ENCODE measurements at regions of chr20 and their contacts with region 1.

Region 1: DNA sequence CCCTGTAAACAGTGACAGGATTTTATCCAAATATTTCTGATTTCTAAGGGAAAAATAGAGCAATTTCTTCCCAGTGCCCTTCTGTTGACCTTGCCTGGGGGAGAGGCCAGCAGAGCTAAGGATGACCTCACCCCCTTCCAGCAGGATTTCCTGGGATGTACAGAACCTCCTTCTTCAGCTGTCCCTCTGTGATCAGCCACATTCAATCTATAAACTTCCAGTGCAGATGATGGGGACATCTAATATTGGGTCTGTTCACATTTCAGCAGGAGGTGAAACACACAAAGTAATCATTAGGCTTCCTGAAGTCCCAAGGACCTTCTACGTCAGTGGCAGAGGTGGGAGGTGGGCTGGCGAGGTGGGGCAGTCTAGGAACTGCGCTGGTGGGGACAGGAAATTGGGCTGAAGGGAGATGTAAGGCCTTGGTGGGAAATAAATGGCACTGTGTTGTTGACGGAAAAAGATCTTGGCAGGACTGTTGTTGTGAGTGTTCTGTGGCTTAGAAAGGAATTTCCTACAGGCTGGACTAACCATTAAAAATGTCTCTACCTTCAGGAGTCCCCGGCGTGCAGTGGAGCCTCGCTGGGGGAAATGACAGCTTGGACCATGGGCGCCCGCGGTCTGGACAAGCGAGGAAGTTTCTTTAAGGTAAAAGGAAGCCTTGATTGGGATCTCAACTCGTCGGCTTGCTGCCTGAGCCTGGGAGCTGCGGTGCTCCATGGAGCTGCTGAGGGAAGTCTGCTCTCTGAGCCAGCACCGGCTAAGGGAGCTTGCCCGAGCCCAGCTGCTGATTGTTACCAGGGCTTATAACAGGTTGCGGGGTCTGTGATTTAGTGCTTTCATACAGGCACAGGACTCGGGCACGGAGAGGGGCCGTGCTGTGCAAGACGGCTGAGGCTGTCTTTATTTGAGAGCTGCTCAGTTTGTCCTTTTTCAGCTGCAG is 127.9 kb upstream of the NAA20 start:
- DNase-seq: peak; percentile 32
- H3K4me3 ChIP-seq: peak overlapping the region in 3 of 4 donors; percentile 11 to 47 (median 18)
- H3K27ac ChIP-seq: peak overlapping the region; percentile 86 to 90 (median 88)
- H3K4me1 ChIP-seq: peaks cover 37 to 78% (median 62%) of the 10 kb centered on the region in 4 donors
- H3K27me3 ChIP-seq: no peaks in the 10 kb centered on the region
- CTCF ChIP-seq: no peak
- EP300 ChIP-seq: no peak
- POLR2A ChIP-seq: peak; percentile 35

Region 2: GRCh38 chr20:19784511-19785172 is 104.6 kb before region 1 on chr20:
- in situ Hi-C with region 1: loop called in 1 of 4 experiments (anchors 25 kb)
- intact Hi-C with region 1: no loop called
- DNase-seq: peak; percentile 36
- H3K4me3 ChIP-seq: no peak overlapping the region
- H3K27ac ChIP-seq: peak overlapping the region; percentile 45 to 71 (median 60)
- H3K4me1 ChIP-seq: peaks cover 8 to 38% (median 25%) of the 10 kb centered on the region in 4 donors
- H3K27me3 ChIP-seq: no peaks in the 10 kb centered on the region
- CTCF ChIP-seq: peak; percentile 72 to 83 (median 82)
- EP300 ChIP-seq: no peak
- POLR2A ChIP-seq: no peak

Region 3: DNA sequence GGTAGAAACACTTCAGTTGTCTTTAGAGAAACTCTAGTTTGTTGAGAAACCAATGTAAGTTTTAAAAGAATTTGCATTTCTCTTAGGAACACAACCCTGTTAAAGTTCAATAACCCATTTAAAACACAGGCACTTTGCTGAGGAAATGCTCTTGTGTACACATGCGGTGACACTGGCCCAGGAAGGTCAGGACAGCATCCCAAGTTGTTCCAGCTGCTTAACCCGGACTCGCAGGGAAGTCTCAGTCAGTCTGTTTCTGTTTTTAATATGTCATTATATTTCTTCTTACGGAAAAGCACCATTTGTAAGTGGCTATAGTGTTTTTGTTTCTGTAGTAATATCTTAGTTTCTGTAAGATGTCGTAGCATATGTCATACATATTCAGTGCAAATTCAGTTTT is 94.3 kb before region 1 on chr20:
- in situ Hi-C with region 1: loop called in 1 of 4 experiments (anchors 25 kb)
- intact Hi-C with region 1: loop called (anchors 10 kb)
- DNase-seq: no peak
- H3K4me3 ChIP-seq: no peak overlapping the region
- H3K27ac ChIP-seq: no peak overlapping the region
- H3K4me1 ChIP-seq: no peaks in the 10 kb centered on the region
- H3K27me3 ChIP-seq: no peaks in the 10 kb centered on the region
- CTCF ChIP-seq: no peak
- EP300 ChIP-seq: no peak
- POLR2A ChIP-seq: no peak

Region 4: DNA sequence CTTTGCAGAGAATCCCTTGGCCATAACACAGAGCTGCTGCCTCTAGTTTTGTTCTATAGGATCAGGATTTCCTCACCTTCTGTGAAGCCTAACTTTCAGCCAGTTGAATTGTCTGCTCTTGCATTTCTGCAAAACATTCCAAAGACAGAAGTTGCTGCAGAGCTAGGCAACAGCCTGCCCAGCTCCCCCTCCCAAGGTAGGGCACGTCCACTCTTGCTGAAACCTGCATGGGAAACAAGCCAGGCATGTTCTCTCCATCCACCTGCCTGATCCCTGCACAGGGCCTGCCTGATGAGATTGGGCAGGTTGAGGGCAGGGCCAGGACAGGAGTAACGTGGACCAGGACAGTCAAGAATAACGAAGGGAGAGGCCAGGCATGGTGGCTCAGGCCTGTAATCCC is 68.9 kb after region 1 on chr20:
- in situ Hi-C with region 1: no loop called
- intact Hi-C with region 1: no loop called
- DNase-seq: no peak
- H3K4me3 ChIP-seq: no peak overlapping the region
- H3K27ac ChIP-seq: no peak overlapping the region
- H3K4me1 ChIP-seq: no peaks in the 10 kb centered on the region
- H3K27me3 ChIP-seq: no peaks in the 10 kb centered on the region
- CTCF ChIP-seq: no peak
- EP300 ChIP-seq: no peak
- POLR2A ChIP-seq: no peak

Region 5: DNA sequence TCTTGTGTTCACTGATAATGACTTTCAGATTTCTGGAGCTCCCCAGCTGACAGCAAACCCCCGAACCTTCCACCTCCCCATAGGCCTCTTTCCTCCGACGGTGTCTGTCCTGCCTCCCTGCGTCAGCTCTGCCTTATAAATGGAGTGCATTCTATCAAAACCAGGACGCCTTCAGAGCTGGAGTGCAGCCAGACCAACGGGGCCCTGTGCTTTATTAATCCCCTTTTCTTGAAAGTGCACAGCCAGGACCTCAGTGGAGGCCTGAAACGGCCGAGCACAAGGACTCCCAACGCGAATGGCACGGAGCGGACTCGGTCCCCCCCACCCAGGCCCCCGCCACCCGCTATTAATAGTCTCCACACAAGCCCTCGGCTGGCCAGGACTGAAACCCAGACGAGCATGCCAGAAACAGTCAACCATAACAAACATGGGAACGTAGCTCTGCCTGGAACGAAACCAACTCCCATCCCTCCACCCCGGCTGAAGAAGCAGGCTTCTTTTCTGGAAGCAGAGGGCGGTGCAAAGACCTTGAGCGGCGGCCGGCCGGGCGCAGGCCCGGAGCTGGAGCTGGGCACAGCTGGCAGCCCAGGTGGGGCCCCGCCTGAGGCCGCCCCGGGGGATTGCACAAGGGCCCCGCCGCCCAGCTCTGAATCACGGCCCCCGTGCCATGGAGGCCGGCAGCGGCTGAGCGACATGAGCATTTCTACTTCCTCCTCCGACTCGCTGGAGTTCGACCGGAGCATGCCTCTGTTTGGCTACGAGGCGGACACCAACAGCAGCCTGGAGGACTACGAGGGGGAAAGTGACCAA is 85.5 kb after region 1 on chr20:
- in situ Hi-C with region 1: no loop called
- intact Hi-C with region 1: loop called (anchors 10 kb)
- DNase-seq: peak; percentile 63
- H3K4me3 ChIP-seq: peak overlapping the region; percentile 35 to 47 (median 40)
- H3K27ac ChIP-seq: peak overlapping the region; percentile 86 to 94 (median 88)
- H3K4me1 ChIP-seq: peaks cover 10 to 45% (median 25%) of the 10 kb centered on the region in 4 donors
- H3K27me3 ChIP-seq: no peaks in the 10 kb centered on the region
- CTCF ChIP-seq: no peak
- EP300 ChIP-seq: no peak
- POLR2A ChIP-seq: no peak